Posterior cingulate gyrus (tissue), 11 donors: ENCODE measurements at regions of chr2 and their contacts with region 1.

Region 1: DNA sequence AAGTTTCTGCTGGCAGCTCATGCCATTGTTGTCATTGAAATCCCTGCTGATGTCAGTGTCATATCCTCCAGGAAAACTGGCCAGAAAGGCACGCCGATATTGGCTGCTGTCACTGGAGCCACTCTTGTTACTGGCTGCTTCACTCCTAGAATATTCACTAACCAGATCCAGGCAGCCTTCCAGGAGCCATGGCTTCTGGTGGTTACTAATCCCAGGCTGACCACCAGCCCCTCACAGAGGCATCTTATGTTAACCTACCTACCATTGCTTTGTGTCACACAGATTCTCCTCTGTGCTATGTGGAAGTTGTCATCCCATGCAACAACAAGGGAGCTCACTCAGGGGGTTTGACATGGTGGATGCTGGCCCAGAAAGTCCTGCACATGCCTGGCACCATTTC is 27.0 kb upstream of the MTX2 start:
- DNase-seq: peak in 2 of 10 donors; percentile 15 to 19

Region 2: GRCh38 chr2:176056406-176056805 is 185.9 kb before region 1 on chr2:
- intact Hi-C with region 1: no loop called
- DNase-seq: no peak

Region 3: GRCh38 chr2:176189681-176190641 is 52.3 kb before region 1 on chr2:
- intact Hi-C with region 1: loop called (anchors 5 kb)
- DNase-seq: peak in 1 of 10 donors; percentile 31

Region 4: GRCh38 chr2:176398243-176399073 is 156.2 kb after region 1 on chr2:
- intact Hi-C with region 1: no loop called
- DNase-seq: no peak